Kidney (tissue), 22 donors: ENCODE measurements at regions of chr6 and their contacts with region 1.

Region 1: DNA sequence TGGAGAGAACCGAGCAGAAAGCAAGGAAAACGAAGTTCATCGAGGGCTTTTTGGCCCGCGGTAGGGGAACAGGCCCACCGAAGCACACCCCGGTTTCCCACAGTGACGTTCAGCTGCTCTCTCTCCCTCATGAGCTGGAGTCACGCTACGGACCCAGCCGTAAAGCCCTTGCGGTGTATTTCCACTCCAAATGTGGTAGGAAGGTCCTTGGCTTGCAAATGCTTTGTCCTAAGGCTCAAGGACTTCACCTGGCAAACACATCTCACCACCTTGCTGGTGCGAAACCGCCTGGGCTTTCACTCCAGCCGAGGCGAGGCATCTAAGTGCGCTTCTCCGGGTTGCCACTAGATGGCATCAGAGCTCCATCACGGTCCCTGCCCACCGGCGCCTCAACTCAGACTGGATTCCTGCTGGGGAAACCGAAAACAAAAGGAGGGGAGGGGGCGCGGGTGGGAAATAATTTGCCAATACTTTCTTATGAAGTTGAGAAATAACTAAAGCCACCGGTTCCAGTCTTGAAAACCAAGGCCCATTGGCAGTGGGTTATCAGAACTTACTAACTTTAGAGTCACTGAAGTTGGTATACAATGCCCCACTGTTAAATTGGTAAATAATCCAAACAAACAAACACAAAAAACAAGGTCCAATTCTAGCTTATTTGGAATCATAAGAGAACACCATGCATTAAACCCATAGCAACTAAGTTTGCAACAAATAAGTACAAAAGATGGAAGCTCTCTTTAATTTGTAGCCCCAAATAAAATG is 13.4 kb upstream of the FOXC1 start:
- DNase-seq: peak in 4 of 5 donors; percentile 77 to 85 (median 78)
- H3K4me3 ChIP-seq: peak overlapping the region in 2 of 3 donors; percentile 30 to 43
- H3K27ac ChIP-seq: no peak overlapping the region
- H3K4me1 ChIP-seq: peaks cover 0 to 2% (median 0%) of the 10 kb centered on the region in 3 donors
- H3K27me3 ChIP-seq: peaks cover 8% of the 10 kb centered on the region
- CTCF ChIP-seq: peak; percentile 90

Region 2: DNA sequence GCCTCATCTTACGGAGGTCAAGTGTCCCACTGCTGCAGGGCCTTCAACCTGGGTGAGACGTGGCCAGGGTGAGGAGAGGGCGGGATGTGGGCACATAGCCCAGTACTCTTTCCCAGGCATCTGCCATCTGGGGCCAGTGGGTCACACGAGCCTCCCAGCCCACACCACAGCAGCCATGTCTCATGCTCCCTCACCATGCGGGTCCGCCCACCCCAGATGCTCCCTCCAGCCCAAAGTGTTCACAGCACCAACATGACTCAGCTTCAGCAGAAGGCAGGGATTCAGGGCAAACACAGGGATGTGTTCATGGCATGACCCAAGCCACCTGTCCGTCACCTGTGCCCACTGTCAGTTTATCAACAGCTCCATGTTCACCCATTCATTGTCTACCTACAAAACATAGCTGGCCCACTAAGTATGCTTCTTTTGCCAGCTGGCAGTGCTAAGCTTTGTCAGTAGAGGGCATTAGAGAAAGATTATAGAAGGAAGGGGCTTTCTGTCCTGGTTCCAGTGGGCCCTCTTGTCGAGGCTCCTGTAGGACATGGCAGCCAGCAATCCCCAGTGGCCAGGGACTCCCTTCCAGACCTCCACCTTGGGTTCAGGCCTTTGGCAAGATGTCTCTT is 97.7 kb before region 1 on chr6:
- intact Hi-C with region 1: no loop called
- DNase-seq: no peak
- H3K4me3 ChIP-seq: no peak overlapping the region
- H3K27ac ChIP-seq: no peak overlapping the region
- H3K4me1 ChIP-seq: no peaks in the 10 kb centered on the region
- H3K27me3 ChIP-seq: no peaks in the 10 kb centered on the region
- CTCF ChIP-seq: no peak

Region 3: GRCh38 chr6:2196079-2196679 is 599.9 kb after region 1 on chr6:
- intact Hi-C with region 1: loop called (anchors 10 kb)
- DNase-seq: peak in 3 of 5 donors; percentile 42 to 81 (median 78)
- H3K4me3 ChIP-seq: no peak overlapping the region
- H3K27ac ChIP-seq: no peak overlapping the region
- H3K4me1 ChIP-seq: no peaks in the 10 kb centered on the region
- H3K27me3 ChIP-seq: no peaks in the 10 kb centered on the region
- CTCF ChIP-seq: peak; percentile 70

Region 4: GRCh38 chr6:2353412-2354137 is 757.3 kb after region 1 on chr6:
- intact Hi-C with region 1: loop called (anchors 10 kb)
- DNase-seq: peak in 4 of 5 donors; percentile 65 to 90 (median 84)
- H3K4me3 ChIP-seq: no peak overlapping the region
- H3K27ac ChIP-seq: no peak overlapping the region
- H3K4me1 ChIP-seq: no peaks in the 10 kb centered on the region
- H3K27me3 ChIP-seq: no peaks in the 10 kb centered on the region
- CTCF ChIP-seq: peak; percentile 78

Region 5: GRCh38 chr6:2749969-2750600 is 1153.8 kb after region 1 on chr6:
- intact Hi-C with region 1: loop called (anchors 10 kb)
- DNase-seq: peak in 4 of 5 donors; percentile 59 to 81 (median 76)
- H3K4me3 ChIP-seq: peak overlapping the region in 2 of 3 donors; percentile 1 to 14
- H3K27ac ChIP-seq: no peak overlapping the region
- H3K4me1 ChIP-seq: no peaks in the 10 kb centered on the region
- H3K27me3 ChIP-seq: no peaks in the 10 kb centered on the region
- CTCF ChIP-seq: peak; percentile 62